ENCODE measurements at regions of chr17 and their contacts with region 1.

Region 1: DNA sequence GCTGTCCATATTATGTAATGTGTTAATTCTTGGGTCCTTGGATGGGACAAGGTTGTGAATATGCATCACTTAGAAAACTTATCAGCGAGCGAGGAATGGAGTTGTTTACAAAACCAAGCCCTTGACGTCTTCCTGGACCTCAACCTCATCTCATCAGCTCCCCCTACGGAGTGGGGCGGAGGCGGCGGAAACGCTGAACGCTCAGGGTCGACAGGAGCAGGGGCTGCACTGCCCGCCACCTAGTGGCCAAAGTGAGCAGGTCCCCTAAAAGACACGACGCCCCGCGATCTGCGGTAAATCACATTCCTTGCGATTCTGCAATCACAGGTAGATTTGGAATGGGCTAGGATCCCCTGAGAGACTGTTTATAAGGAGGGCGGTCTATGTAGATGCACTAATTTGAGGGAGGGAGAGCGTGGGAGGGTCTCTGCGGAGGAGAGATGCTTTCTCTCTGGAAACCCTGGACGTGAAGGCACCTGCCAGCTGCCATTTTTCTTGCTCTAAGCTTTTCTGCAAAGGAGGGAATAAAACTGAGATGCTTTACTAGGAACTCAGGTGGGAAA is 5.4 kb upstream of the ICAM2 start:
- DNase-seq: peak; percentile 76 to 98 (median 95)
- ATAC-seq: peak; percentile 95
- H3K4me3 ChIP-seq: peak overlapping the region; percentile 64
- H3K4me3 Mint-ChIP-seq: peak overlapping the region; percentile 74 to 93 (median 83)
- H3K27ac ChIP-seq: peak overlapping the region; percentile 79
- H3K27ac Mint-ChIP-seq: peak overlapping the region; percentile 87 to 100 (median 96)
- H3K4me1 ChIP-seq: peaks cover 49 to 51% of the 10 kb centered on the region in 2 donors
- H3K4me1 Mint-ChIP-seq: peaks cover 37 to 73% (median 68%) of the 10 kb centered on the region in 7 donors
- H3K27me3 ChIP-seq: no peaks in the 10 kb centered on the region
- H3K27me3 Mint-ChIP-seq: no peaks in the 10 kb centered on the region

Region 2: GRCh38 chr17:63919311-63919723 is 106.5 kb before region 1 on chr17:
- CTCF ChIA-PET with region 1: interaction called, 85 read pairs
- POLR2A ChIA-PET with region 1: interaction called, 16 read pairs
- intact Hi-C with region 1: loop called (anchors 1 kb)
- DNase-seq: peak; percentile 53 to 81 (median 68)
- ATAC-seq: peak; percentile 97
- H3K4me3 ChIP-seq: no peak overlapping the region
- H3K4me3 Mint-ChIP-seq: no peak overlapping the region
- H3K27ac ChIP-seq: no peak overlapping the region
- H3K27ac Mint-ChIP-seq: peak overlapping the region in 8 of 9 donors; percentile 3 to 86 (median 8)
- H3K4me1 ChIP-seq: peaks cover 0 to 4% of the 10 kb centered on the region in 2 donors
- H3K4me1 Mint-ChIP-seq: peaks cover 5 to 10% (median 9%) of the 10 kb centered on the region in 7 donors
- H3K27me3 ChIP-seq: no peaks in the 10 kb centered on the region
- H3K27me3 Mint-ChIP-seq: peaks cover 0 to 16% (median 0%) of the 10 kb centered on the region in 5 donors

Region 3: GRCh38 chr17:63954402-63955063 is 71.3 kb before region 1 on chr17:
- CTCF ChIA-PET with region 1: interaction called, 10 read pairs
- POLR2A ChIA-PET with region 1: interaction called, 4 read pairs
- intact Hi-C with region 1: no loop called
- DNase-seq: peak in 7 of 9 donors; percentile 10 to 43 (median 33)
- ATAC-seq: peak; percentile 73
- H3K4me3 ChIP-seq: no peak overlapping the region
- H3K4me3 Mint-ChIP-seq: peak overlapping the region in 8 of 10 donors; percentile 40 to 70 (median 58)
- H3K27ac ChIP-seq: no peak overlapping the region
- H3K27ac Mint-ChIP-seq: peak overlapping the region; percentile 58 to 92 (median 81)
- H3K4me1 ChIP-seq: peaks cover 17 to 18% of the 10 kb centered on the region in 2 donors
- H3K4me1 Mint-ChIP-seq: peaks cover 9 to 31% (median 20%) of the 10 kb centered on the region in 7 donors
- H3K27me3 ChIP-seq: no peaks in the 10 kb centered on the region
- H3K27me3 Mint-ChIP-seq: no peaks in the 10 kb centered on the region

Region 4: GRCh38 chr17:64041912-64042311 is 16.1 kb after region 1 on chr17:
- CTCF ChIA-PET with region 1: interaction called, 21 read pairs
- POLR2A ChIA-PET with region 1: interaction called, 6 read pairs
- intact Hi-C with region 1: no loop called
- DNase-seq: no peak
- ATAC-seq: no peak
- H3K4me3 ChIP-seq: no peak overlapping the region
- H3K4me3 Mint-ChIP-seq: no peak overlapping the region
- H3K27ac ChIP-seq: no peak overlapping the region
- H3K27ac Mint-ChIP-seq: peak overlapping the region in 5 of 9 donors; percentile 32 to 75 (median 57)
- H3K4me1 ChIP-seq: no peaks in the 10 kb centered on the region
- H3K4me1 Mint-ChIP-seq: peaks cover 0 to 27% (median 5%) of the 10 kb centered on the region in 7 donors
- H3K27me3 ChIP-seq: no peaks in the 10 kb centered on the region
- H3K27me3 Mint-ChIP-seq: no peaks in the 10 kb centered on the region

Region 5: DNA sequence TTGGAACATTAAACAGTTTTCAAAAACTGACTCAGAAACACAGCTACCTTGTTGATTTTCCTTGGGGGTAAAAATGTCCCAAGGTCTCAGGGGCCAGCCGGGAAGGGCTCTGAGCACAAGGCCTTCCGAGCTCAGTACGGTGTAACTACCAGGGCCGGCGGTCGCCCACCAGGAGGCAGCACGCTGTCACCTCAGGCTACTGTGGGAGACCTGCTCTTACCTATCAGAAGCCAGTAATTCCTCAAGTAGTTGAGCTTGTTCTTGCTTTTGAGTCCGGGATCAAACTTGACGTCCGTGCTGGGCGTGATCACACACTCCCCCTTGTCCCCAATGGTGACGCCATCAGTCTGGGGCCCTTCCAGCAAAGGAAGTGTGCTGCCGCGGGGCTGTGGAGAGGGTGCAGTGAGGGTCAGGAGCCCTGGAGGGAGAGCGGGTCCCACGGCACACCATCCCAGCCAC is 38.0 kb after region 1 on chr17:
- CTCF ChIA-PET with region 1: interaction called, 39 read pairs
- POLR2A ChIA-PET with region 1: interaction called, 6 read pairs
- intact Hi-C with region 1: loop called in 1 of 2 experiments (anchors 5 kb)
- DNase-seq: peak; percentile 36 to 71 (median 56)
- ATAC-seq: peak; percentile 73
- H3K4me3 ChIP-seq: no peak overlapping the region
- H3K4me3 Mint-ChIP-seq: peak overlapping the region in 3 of 10 donors; percentile 33 to 64 (median 54)
- H3K27ac ChIP-seq: no peak overlapping the region
- H3K27ac Mint-ChIP-seq: peak overlapping the region in 5 of 9 donors; percentile 51 to 80 (median 69)
- H3K4me1 ChIP-seq: peaks cover 23 to 84% of the 10 kb centered on the region in 2 donors
- H3K4me1 Mint-ChIP-seq: peaks cover 40 to 88% (median 56%) of the 10 kb centered on the region in 7 donors
- H3K27me3 ChIP-seq: no peaks in the 10 kb centered on the region
- H3K27me3 Mint-ChIP-seq: no peaks in the 10 kb centered on the region

Region 6: DNA sequence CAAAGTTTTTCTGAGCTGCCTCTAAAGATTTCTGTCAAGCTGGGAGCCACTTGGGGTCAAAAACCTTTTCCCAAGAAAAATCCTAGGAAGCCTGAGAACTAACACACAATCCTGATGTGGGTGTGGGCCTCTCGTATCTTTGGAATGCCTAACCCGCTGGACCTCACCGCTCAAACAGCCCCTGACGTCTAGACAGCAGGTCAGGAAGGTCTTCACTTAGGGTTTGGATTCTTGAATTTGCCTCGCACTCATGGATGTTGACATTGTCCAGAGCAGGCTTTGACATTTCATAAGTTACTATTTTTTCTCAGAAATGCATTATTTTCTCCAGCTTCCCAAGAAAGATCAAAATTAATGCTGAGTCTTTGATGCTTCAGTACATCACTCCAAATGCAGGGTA is 218.4 kb after region 1 on chr17:
- CTCF ChIA-PET with region 1: no interaction called
- POLR2A ChIA-PET with region 1: no interaction called
- intact Hi-C with region 1: no loop called
- DNase-seq: no peak
- ATAC-seq: no peak
- H3K4me3 ChIP-seq: no peak overlapping the region
- H3K4me3 Mint-ChIP-seq: no peak overlapping the region
- H3K27ac ChIP-seq: no peak overlapping the region
- H3K27ac Mint-ChIP-seq: no peak overlapping the region
- H3K4me1 ChIP-seq: peaks cover 0 to 5% of the 10 kb centered on the region in 2 donors
- H3K4me1 Mint-ChIP-seq: peaks cover 0 to 49% (median 35%) of the 10 kb centered on the region in 7 donors
- H3K27me3 ChIP-seq: no peaks in the 10 kb centered on the region
- H3K27me3 Mint-ChIP-seq: no peaks in the 10 kb centered on the region

Region 7: GRCh38 chr17:64281962-64282727 is 256.3 kb after region 1 on chr17:
- CTCF ChIA-PET with region 1: interaction called, 5 read pairs
- POLR2A ChIA-PET with region 1: interaction called, 4 read pairs
- intact Hi-C with region 1: loop called (anchors 1 kb)
- DNase-seq: peak in 8 of 9 donors; percentile 31 to 61 (median 54)
- ATAC-seq: peak; percentile 83
- H3K4me3 ChIP-seq: no peak overlapping the region
- H3K4me3 Mint-ChIP-seq: no peak overlapping the region
- H3K27ac ChIP-seq: no peak overlapping the region
- H3K27ac Mint-ChIP-seq: peak overlapping the region in 1 of 9 donors; percentile 20
- H3K4me1 ChIP-seq: peaks cover 0 to 5% of the 10 kb centered on the region in 2 donors
- H3K4me1 Mint-ChIP-seq: peaks cover 0 to 7% (median 0%) of the 10 kb centered on the region in 7 donors
- H3K27me3 ChIP-seq: no peaks in the 10 kb centered on the region
- H3K27me3 Mint-ChIP-seq: peaks cover 0 to 8% (median 0%) of the 10 kb centered on the region in 5 donors

Measured in naive thymus-derived CD4-positive, alpha-beta T cell (primary cell).